ENCODE measurements at regions of chr10 and their contacts with region 1.

Region 1: DNA sequence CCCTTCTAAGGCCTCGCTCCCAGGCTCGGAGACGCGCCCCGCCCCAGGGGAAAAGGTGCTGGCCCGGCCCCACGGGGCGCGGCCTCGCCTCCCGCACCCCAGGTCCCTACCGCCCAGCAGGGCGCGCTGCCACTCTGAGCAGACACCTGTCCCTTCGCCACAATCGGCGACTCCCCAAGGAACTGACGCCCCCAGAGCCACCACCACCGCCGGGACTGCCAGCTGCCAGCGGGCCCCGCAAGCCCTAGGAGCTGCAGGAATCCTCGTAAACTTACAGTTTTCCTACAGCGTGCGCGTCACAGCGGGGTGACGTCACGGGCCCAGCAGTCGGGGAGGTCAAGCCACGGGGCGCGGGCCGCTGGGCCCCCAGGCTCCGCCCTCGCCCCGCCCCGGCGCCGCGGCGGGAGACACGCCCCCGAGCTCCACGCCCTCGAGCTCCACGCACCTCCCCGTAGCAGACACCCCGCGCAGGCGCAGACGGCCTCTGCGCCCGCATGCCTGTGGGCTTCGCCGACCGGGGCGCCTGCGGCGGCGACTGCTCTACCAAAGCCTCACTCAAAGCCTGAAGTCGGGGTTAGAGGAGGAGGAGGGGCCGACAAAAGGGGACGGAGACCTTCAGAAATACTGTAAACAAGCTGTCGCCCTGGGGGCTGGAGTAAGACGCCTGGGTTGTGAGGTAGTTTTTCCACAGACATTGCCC is at the start of gene ZNF438:
- DNase-seq: peak; percentile 95 to 98
- ATAC-seq: peak; percentile 90 to 95 (median 94)
- H3K4me3 ChIP-seq: peak within 1 kb of the TSS; percentile 79
- H3K27ac ChIP-seq: peak within 1 kb of the TSS; percentile 100
- H3K4me1 ChIP-seq: peaks cover 44% of the 10 kb centered on the region
- H3K27me3 ChIP-seq: no peaks in the 10 kb centered on the region
- CTCF ChIP-seq: peak; percentile 52
- total RNA-seq, gene ZNF438: 12.3 to 27.9 (median 17.2) TPM

Region 2: DNA sequence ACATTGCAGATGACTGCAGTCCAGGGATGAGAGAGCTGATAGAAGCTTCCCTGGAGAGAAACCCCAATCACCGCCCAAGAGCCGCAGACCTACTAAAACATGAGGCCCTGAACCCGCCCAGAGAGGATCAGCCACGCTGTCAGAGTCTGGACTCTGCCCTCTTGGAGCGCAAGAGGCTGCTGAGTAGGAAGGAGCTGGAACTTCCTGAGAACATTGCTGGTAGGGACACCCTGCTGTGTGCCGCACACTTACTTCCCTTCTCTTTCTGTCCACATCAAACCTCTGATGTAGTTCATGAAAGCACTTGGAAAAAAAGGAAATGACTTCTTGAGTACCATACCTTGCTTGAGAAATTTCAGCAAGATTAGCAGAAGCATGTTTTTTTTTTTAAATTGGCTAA is 572.4 kb before region 1 on chr10:
- intact Hi-C with region 1: no loop called
- DNase-seq: peak; percentile 34 to 59
- ATAC-seq: peak in 1 of 4 donors; percentile 37
- H3K4me3 ChIP-seq: no peak overlapping the region
- H3K27ac ChIP-seq: no peak overlapping the region
- H3K4me1 ChIP-seq: peaks cover 56% of the 10 kb centered on the region
- H3K27me3 ChIP-seq: no peaks in the 10 kb centered on the region
- CTCF ChIP-seq: no peak

Region 3: DNA sequence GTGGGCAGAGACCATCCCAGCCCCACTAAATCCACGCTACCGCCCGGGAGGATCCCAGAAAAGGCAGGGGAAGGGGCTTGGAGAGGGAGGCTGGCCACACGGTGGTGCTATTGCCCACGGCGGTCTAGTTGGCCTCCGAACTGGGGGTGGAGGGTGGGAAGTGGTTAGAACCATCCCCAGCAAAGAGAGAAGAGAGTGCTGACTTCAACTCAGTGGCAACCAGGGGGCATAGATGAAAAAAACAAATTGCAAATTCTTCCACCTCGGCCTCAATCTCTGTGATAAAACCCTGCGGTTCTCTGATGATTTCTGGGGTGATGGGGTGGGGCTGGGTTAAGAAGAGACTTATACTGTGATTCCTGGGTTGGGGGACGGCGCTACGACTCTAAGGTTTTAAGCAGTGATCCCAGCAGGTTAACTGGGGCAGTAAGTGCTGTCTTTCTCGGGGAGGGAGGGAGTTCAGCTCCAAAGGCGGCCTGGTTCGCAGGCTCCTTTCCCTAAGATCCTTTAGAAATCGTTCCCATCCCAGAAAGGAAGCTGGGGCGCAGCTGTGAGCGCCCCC is 247.7 kb before region 1 on chr10:
- intact Hi-C with region 1: loop called (anchors 1 to 10 kb)
- DNase-seq: peak; percentile 86 to 94
- ATAC-seq: peak; percentile 80 to 90 (median 88)
- H3K4me3 ChIP-seq: peak overlapping the region; percentile 91
- H3K27ac ChIP-seq: peak overlapping the region; percentile 92
- H3K4me1 ChIP-seq: peaks cover 20% of the 10 kb centered on the region
- H3K27me3 ChIP-seq: no peaks in the 10 kb centered on the region
- CTCF ChIP-seq: peak; percentile 80

Region 4: DNA sequence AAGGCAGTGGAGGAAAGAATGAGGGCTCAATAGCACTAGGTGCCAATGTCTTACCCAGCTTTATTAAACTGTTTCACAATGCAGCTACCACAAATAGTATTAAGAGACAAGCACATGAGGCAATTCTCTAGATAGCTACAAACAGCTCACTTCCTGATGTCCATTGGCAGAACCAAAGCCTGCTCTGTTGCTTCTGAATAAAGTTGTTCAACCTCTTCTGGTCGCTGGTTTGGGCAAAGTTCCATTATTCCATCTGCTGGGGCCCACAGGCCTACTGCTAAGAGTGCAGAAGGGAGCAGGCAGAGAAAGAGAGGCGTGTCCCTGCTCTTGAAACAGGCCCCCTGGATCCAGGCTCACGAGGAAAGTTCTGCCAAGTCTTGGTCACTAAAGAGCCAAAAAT is 173.9 kb before region 1 on chr10:
- intact Hi-C with region 1: loop called in 1 of 2 experiments (anchors 5 kb)
- DNase-seq: peak; percentile 74 to 87
- ATAC-seq: peak; percentile 92 to 96 (median 94)
- H3K4me3 ChIP-seq: no peak overlapping the region
- H3K27ac ChIP-seq: peak overlapping the region; percentile 77
- H3K4me1 ChIP-seq: peaks cover 34% of the 10 kb centered on the region
- H3K27me3 ChIP-seq: no peaks in the 10 kb centered on the region
- CTCF ChIP-seq: no peak

Region 5: GRCh38 chr10:30970760-30971460 is 60.8 kb before region 1 on chr10:
- intact Hi-C with region 1: loop called (anchors 5 kb)
- DNase-seq: peak; percentile 31 to 58
- ATAC-seq: peak in 3 of 4 donors; percentile 26 to 32 (median 32)
- H3K4me3 ChIP-seq: peak overlapping the region; percentile 38
- H3K27ac ChIP-seq: peak overlapping the region; percentile 86
- H3K4me1 ChIP-seq: peaks cover 49% of the 10 kb centered on the region
- H3K27me3 ChIP-seq: no peaks in the 10 kb centered on the region
- CTCF ChIP-seq: no peak

Region 6: GRCh38 chr10:31064348-31064747 is 32.6 kb after region 1 on chr10:
- intact Hi-C with region 1: loop called in 1 of 2 experiments (anchors 1 kb)
- DNase-seq: peak; percentile 30 to 59
- ATAC-seq: peak in 3 of 4 donors; percentile 50 to 67 (median 59)
- H3K4me3 ChIP-seq: no peak overlapping the region
- H3K27ac ChIP-seq: peak overlapping the region; percentile 51
- H3K4me1 ChIP-seq: no peaks in the 10 kb centered on the region
- H3K27me3 ChIP-seq: no peaks in the 10 kb centered on the region
- CTCF ChIP-seq: no peak

Region 7: DNA sequence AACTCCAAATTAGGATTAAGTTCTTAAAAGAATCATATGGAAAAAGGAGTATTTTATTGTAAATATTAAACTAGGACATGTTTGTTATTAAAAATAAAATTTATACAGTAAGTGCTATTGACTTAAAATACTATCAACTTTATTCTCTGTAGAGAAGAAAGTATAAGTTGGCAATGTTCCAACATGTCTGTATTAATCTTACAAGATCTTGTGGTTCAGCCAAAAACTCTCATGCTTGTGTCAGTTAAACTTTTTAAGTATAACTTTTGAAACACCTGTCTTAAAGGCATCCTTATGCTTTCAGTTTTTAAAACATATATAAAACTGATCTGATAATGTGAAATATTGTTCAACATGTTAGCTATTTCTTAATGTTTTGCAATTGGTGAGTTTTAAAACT is 448.0 kb after region 1 on chr10:
- intact Hi-C with region 1: loop called in 1 of 2 experiments (anchors 10 kb)
- DNase-seq: no peak
- ATAC-seq: no peak
- H3K4me3 ChIP-seq: no peak overlapping the region
- H3K27ac ChIP-seq: no peak overlapping the region
- H3K4me1 ChIP-seq: no peaks in the 10 kb centered on the region
- H3K27me3 ChIP-seq: no peaks in the 10 kb centered on the region
- CTCF ChIP-seq: no peak

Region 8: DNA sequence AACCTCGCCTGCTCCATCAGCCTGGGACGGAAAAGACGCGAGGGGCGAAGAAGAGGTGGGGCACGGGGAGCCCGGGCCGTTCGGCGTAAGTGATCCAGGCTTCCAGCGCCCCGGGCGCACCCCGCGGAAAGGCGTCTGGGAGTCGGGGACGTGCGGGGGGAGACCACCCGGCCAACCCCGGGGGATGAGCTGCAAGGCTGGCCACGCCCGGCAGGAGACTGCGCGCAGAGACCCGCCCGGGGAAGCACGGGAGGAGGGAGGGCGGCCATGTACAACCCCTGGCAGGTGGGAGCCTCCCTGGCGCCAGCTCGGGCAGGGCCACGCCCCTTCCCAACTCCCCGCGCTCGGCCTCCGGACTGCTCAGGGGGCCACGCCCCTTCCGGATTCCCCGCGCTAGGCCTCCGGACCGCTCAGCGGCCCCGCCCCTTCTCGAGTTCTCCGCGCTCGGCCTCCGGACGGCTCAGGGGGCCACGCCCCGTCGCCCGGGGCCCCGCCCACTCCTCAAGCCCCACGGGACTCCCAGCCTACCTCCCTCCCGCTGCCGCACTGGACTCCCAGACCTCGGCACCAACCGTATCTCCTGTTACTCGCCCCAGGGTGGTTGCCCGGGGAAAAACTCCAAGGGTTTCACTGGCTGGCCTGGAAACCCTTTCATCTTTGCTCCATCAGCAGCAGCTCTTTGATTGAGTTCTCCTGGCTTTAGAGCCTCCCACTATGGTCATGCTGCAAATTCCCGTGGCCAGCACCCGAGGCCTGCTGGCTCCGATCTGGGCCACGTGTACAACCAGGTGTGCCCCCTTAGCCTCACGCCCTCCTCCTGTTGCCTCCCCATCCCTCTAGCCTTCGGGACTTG is 571.8 kb after region 1 on chr10:
- intact Hi-C with region 1: loop called in 1 of 2 experiments (anchors 5 kb)
- DNase-seq: peak; percentile 97 to 98
- ATAC-seq: peak; percentile 90 to 95 (median 92)
- H3K4me3 ChIP-seq: peak overlapping the region; percentile 83
- H3K27ac ChIP-seq: peak overlapping the region; percentile 97
- H3K4me1 ChIP-seq: peaks cover 7% of the 10 kb centered on the region
- H3K27me3 ChIP-seq: no peaks in the 10 kb centered on the region
- CTCF ChIP-seq: no peak

Measured in psoas muscle (tissue), 8 donors.